CD8-positive, alpha-beta T cell (primary cell): ENCODE measurements at regions of chr15 and their contacts with region 1.

Region 1: DNA sequence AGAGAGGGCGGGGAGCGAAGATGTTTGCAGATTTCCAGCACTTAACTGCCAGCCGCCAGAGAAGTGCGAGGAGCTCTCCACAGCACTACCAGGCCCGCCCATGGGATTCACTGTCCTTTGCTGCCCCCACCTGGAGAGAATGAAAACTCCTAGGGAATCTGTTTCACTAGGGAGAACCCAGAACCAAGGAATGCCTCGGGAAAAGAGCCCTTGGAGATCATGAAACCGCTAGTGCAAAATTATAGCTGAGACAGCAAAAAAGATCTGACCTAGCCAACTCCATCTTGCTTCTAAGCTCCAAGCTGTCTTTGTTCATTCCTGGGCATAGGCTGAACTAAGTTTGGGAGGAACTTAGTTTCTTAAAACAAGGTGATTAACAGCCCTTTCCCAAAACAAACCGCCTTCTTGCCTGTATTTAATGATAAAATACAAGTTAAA is 82.6 kb upstream of the GCNT3 start:
- DNase-seq: peak; percentile 32 to 82 (median 72)
- ATAC-seq: peak; percentile 81
- H3K4me3 ChIP-seq: no peak overlapping the region
- H3K4me3 Mint-ChIP-seq: no peak overlapping the region
- H3K27ac ChIP-seq: no peak overlapping the region
- H3K27ac Mint-ChIP-seq: no peak overlapping the region
- H3K4me1 ChIP-seq: peaks cover 13% of the 10 kb centered on the region
- H3K4me1 Mint-ChIP-seq: peaks cover 23% of the 10 kb centered on the region
- H3K27me3 ChIP-seq: peaks cover 0 to 2% of the 10 kb centered on the region in 2 experiments
- H3K27me3 Mint-ChIP-seq: peaks cover 4% of the 10 kb centered on the region
- CTCF ChIP-seq: peak; percentile 73

Region 2: DNA sequence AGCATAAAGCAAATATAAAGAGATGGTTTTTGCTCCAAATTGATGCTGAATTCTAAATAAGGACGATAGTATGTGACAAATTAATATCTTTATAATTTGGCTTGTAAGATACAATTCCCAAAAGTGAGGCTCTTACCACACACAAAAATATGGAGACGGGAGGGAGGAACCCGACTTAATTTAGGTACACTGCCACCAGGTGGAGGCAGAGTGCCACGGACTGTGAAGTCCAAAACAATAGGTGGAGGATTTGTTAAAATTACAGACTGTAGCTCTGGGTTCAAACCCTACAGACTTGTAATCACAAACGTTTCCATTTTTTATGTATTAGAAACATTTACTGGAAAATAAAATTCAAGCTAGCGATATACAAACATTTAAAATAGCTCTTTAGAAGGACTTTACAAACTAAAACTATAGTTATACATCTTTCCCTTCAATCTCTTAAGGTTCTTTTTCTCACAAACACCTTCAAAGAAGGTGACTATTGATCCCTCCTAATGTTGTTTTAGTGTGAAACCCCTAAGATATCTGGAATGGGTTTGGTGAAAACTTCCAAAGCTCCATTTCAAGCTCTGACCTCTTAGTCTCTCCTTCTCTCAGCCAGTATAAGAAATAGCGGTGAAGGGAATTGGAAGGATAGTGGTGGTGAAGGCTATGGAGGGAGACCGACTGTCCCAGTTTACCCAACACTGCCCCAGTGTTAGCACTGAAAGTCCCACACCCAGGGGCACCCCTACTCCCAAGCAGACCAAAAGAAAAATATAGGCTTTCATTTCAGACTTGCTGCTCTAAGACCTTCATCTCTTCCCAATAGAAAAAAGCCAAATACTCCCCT is 1301.1 kb before region 1 on chr15:
- CTCF ChIA-PET with region 1: interaction called, 7 read pairs
- POLR2A ChIA-PET with region 1: no interaction called
- intact Hi-C with region 1: loop called in 1 of 2 experiments (anchors 1 kb)
- DNase-seq: peak; percentile 10 to 76 (median 62)
- ATAC-seq: no peak
- H3K4me3 ChIP-seq: no peak overlapping the region
- H3K4me3 Mint-ChIP-seq: no peak overlapping the region
- H3K27ac ChIP-seq: no peak overlapping the region
- H3K27ac Mint-ChIP-seq: no peak overlapping the region
- H3K4me1 ChIP-seq: no peaks in the 10 kb centered on the region
- H3K4me1 Mint-ChIP-seq: peaks cover 14% of the 10 kb centered on the region
- H3K27me3 ChIP-seq: no peaks in the 10 kb centered on the region
- H3K27me3 Mint-ChIP-seq: peaks cover 5% of the 10 kb centered on the region
- CTCF ChIP-seq: peak; percentile 87

Region 3: GRCh38 chr15:58980351-58980939 is 548.5 kb before region 1 on chr15:
- CTCF ChIA-PET with region 1: interaction called, 35 read pairs
- POLR2A ChIA-PET with region 1: interaction called, 3 read pairs
- intact Hi-C with region 1: loop called (anchors 1 to 2 kb)
- DNase-seq: peak in 2 of 9 experiments; percentile 61 to 72
- ATAC-seq: peak; percentile 38
- H3K4me3 ChIP-seq: no peak overlapping the region
- H3K4me3 Mint-ChIP-seq: peak overlapping the region; percentile 29
- H3K27ac ChIP-seq: no peak overlapping the region
- H3K27ac Mint-ChIP-seq: no peak overlapping the region
- H3K4me1 ChIP-seq: peaks cover 23% of the 10 kb centered on the region
- H3K4me1 Mint-ChIP-seq: peaks cover 29% of the 10 kb centered on the region
- H3K27me3 ChIP-seq: no peaks in the 10 kb centered on the region
- H3K27me3 Mint-ChIP-seq: no peaks in the 10 kb centered on the region
- CTCF ChIP-seq: peak; percentile 79

Region 4: GRCh38 chr15:59492389-59493377 is 36.3 kb before region 1 on chr15:
- CTCF ChIA-PET with region 1: interaction called, 53 read pairs
- POLR2A ChIA-PET with region 1: no interaction called
- intact Hi-C with region 1: loop called (anchors 1 to 2 kb)
- DNase-seq: peak; percentile 17 to 79 (median 57)
- ATAC-seq: peak; percentile 81
- H3K4me3 ChIP-seq: no peak overlapping the region
- H3K4me3 Mint-ChIP-seq: no peak overlapping the region
- H3K27ac ChIP-seq: no peak overlapping the region
- H3K27ac Mint-ChIP-seq: no peak overlapping the region
- H3K4me1 ChIP-seq: no peaks in the 10 kb centered on the region
- H3K4me1 Mint-ChIP-seq: peaks cover 3% of the 10 kb centered on the region
- H3K27me3 ChIP-seq: no peaks in the 10 kb centered on the region
- H3K27me3 Mint-ChIP-seq: no peaks in the 10 kb centered on the region
- CTCF ChIP-seq: peak; percentile 88

Region 5: GRCh38 chr15:59545573-59545972 is 16.6 kb after region 1 on chr15:
- CTCF ChIA-PET with region 1: interaction called, 11 read pairs
- POLR2A ChIA-PET with region 1: no interaction called
- intact Hi-C with region 1: no loop called
- DNase-seq: no peak
- ATAC-seq: no peak
- H3K4me3 ChIP-seq: no peak overlapping the region
- H3K4me3 Mint-ChIP-seq: no peak overlapping the region
- H3K27ac ChIP-seq: no peak overlapping the region
- H3K27ac Mint-ChIP-seq: no peak overlapping the region
- H3K4me1 ChIP-seq: no peaks in the 10 kb centered on the region
- H3K4me1 Mint-ChIP-seq: peaks cover 5% of the 10 kb centered on the region
- H3K27me3 ChIP-seq: no peaks in the 10 kb centered on the region
- H3K27me3 Mint-ChIP-seq: peaks cover 14% of the 10 kb centered on the region
- CTCF ChIP-seq: no peak

Region 6: DNA sequence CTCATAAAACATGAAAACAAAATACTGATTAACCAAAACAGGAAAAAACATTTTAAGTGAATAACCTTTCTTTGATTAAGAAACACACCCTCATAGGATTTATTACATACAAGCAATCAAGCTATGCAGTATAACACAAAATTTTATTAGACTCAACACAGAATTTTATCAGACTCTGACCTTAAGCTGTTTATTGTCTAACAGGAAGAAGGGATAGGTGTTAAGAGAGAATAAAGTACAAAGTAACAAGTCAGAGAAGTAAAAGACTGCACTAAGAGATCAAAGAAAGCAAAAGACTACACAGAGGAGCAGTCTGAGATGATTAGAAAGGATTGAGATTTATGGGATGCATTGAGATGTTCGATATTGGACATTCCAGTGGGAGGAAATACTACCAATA is 912.3 kb after region 1 on chr15:
- CTCF ChIA-PET with region 1: no interaction called
- POLR2A ChIA-PET with region 1: no interaction called
- intact Hi-C with region 1: no loop called
- DNase-seq: no peak
- ATAC-seq: no peak
- H3K4me3 ChIP-seq: no peak overlapping the region
- H3K4me3 Mint-ChIP-seq: no peak overlapping the region
- H3K27ac ChIP-seq: no peak overlapping the region
- H3K27ac Mint-ChIP-seq: peak overlapping the region; percentile 41
- H3K4me1 ChIP-seq: no peaks in the 10 kb centered on the region
- H3K4me1 Mint-ChIP-seq: peaks cover 7% of the 10 kb centered on the region
- H3K27me3 ChIP-seq: no peaks in the 10 kb centered on the region
- H3K27me3 Mint-ChIP-seq: no peaks in the 10 kb centered on the region
- CTCF ChIP-seq: no peak